Activated CD8-positive, alpha-beta T cell treated with anti-CD3 and anti-CD28 coated beads, Interleukin-2, amount 10 ng/mL, durations not matched to agents 7 days and 5 days (primary cell): ENCODE measurements at regions of chr22 and their contacts with region 1.

Region 1: GRCh38 chr22:49827853-49828598 is at the start of gene BRD1:
- DNase-seq: peak; percentile 59
- ATAC-seq: peak; percentile 55
- H3K4me3 Mint-ChIP-seq: peak within 1 kb of the TSS; percentile 93
- H3K27ac Mint-ChIP-seq: peak within 1 kb of the TSS; percentile 97
- H3K4me1 Mint-ChIP-seq: peaks cover 43% of the 10 kb centered on the region
- H3K27me3 Mint-ChIP-seq: no peaks in the 10 kb centered on the region
- total RNA-seq, gene BRD1: 43.0 to 44.3 TPM

Region 2: DNA sequence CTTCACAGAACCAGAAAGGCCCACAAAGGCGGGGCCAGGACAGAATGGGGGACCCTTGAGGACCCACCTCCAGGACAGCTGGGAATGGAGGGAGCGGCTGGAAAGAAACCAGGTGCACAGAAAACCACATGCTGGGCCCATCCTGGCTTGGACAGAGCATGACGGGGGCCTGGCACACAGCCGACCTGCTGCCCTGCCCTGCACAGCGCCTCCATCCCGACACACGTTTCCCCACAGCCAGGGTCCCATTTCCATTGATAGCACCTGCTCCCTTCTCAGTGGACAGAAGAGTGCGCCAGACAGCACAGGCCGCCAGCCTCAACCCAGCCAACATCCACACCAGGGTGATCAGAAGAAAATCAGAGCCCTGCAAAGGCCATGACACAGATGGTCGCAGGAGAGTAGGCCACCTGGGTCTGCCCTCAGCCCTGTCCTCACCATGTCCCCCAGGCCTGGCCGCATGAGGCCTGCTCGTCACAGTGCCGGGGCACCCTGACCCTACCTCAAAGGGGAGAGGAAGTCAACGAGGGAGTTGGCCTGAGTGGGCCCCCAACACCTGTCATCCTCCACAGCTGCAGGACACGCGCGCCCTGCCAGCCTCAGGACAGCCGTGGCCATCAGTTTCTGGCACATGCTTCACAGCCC is 28.5 kb before region 1 on chr22:
- CTCF ChIA-PET with region 1: no interaction called
- POLR2A ChIA-PET with region 1: no interaction called
- DNase-seq: no peak
- ATAC-seq: no peak
- H3K4me3 Mint-ChIP-seq: no peak overlapping the region
- H3K27ac Mint-ChIP-seq: no peak overlapping the region
- H3K4me1 Mint-ChIP-seq: peaks cover 12% of the 10 kb centered on the region
- H3K27me3 Mint-ChIP-seq: no peaks in the 10 kb centered on the region

Region 3: DNA sequence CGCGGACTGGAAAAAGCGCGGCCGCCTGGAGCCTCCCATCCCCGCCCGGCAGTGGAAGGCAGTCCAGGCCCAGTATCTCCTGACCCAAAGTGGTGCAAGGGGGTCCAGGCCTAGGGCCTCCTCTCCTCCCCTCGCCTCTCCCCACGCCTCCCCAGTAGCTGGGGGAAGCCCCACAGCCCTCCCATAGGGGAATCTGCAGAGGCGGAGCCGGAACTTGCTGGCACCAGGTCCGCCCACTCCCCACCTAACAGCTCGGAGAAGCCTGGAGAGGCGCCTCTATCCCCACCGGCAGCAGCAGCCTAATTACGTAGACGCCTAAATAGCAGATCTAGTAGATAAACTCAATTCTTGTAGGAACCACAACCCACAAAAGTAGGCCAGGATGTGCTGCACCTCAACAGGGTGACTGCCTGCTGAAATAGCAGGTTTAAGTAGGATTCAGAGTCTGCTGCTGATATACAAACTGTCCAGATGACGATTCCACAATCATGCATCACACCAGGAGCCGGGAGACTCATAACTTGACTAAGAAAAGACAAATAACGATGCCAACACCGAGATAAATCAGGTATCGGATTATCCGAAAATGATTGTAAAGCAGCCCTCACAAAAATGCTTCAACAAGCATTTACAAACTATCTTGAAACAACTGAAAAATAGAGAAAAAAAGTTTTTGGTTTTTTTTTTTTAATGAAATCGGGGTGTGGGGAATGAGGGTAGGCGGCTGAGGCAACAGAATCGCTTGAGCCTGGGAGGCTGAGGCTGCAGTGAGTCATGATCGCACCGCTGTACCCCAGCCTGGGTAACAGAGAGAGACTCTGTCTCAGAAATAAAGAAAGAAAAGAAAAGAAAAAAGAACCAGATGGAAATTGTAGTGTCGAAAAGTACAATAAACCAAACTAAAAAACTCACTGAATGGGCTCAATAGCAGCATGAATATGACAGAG is 11.0 kb after region 1 on chr22:
- CTCF ChIA-PET with region 1: interaction called, 8 read pairs
- POLR2A ChIA-PET with region 1: interaction called, 50 read pairs
- DNase-seq: peak; percentile 91
- ATAC-seq: peak; percentile 96
- H3K4me3 Mint-ChIP-seq: peak overlapping the region; percentile 59
- H3K27ac Mint-ChIP-seq: peak overlapping the region; percentile 91
- H3K4me1 Mint-ChIP-seq: peaks cover 36% of the 10 kb centered on the region
- H3K27me3 Mint-ChIP-seq: peaks cover 4% of the 10 kb centered on the region

Region 4: DNA sequence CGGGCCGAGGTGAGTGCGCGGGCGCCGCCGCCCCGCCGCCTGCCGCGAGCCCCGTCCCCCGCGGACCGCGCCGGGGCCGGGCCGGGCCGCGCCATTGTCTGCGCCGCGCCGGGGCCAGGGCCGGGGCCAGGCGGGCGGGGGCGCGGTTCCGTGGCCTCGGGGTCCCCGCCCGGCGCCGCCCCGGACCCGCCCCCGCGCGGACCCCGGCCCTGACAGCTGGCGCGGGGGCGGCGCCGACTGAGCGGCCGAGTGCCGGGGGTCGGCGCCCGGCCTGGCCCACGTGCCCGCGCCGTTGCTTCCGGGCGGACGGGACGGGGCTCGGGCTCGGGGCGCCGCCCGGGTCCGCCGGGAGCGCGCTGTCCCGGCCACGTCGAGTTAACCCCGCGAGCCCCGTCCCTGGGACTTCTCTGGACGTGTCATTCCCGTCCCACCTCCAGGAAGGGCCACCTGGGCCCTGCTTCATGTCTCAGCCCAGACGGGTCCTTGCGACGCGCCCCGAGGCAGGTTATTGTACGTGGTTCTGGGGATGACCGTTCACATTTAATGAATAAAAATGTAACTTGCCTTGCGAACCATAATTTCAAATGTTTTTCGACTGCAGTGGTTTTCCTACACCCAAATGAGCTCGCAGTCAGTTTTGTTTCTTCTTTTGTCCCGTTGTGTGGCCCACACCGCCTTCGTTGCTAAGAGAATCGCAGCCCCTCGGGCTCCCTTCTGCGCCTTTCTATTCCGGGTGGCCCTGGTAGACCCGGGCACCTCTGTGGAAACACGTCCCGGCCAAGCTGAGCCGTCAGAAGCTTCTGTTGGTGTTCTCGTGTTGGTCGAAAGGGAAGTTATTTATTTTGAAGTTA is 26.2 kb after region 1 on chr22:
- CTCF ChIA-PET with region 1: interaction called, 4 read pairs
- POLR2A ChIA-PET with region 1: interaction called, 19 read pairs
- DNase-seq: peak; percentile 50
- ATAC-seq: peak; percentile 37
- H3K4me3 Mint-ChIP-seq: peak overlapping the region; percentile 97
- H3K27ac Mint-ChIP-seq: peak overlapping the region; percentile 93
- H3K4me1 Mint-ChIP-seq: peaks cover 54% of the 10 kb centered on the region
- H3K27me3 Mint-ChIP-seq: peaks cover 6% of the 10 kb centered on the region